Calu3 (cell line): ENCODE measurements at regions of chr11 and their contacts with region 1.

Region 1: DNA sequence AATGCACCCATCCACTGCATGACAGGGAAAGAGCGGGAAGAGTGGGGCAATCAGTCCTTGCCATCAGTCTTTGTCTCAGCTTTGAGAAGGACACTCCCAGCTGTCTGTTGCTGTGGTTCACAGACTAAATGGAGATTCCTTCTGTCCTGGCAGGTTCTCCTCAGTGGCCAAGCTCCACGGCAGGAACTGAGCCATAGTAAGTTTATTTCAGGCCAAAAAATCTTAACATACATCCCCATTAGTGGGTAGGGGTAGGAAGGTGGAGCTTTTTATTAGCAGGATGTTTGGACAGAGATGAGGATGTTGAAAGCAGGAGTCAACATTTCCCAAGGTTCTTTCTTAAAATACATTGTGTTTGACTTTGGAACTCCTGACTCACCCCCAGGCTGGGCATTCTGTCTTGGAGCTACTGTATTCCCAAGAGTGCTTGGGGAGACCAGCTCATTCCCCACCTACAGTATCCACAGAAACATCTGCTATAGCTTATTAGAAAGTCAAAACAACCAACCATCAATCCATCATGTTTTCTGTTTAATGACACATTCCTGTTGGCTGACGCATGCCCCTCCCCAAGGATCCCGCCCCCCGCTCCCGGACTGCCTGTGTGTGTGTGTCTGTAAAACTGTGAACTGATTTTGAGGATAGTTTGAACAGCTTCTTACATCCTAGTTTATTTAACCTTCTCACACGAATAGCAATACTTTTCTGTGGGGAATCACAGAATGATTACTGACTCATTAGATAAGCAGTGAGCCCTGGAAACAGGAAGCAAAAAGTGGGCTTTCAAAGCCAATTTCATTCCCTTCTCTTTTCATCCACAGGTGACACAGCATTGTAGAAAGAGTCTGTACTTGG is 109.5 kb downstream of the CCDC81 start:
- DNase-seq: peak; percentile 62
- H3K4me3 Mint-ChIP-seq: no peak overlapping the region
- H3K27ac Mint-ChIP-seq: peak overlapping the region; percentile 71
- H3K4me1 Mint-ChIP-seq: peaks cover 46% of the 10 kb centered on the region
- H3K27me3 Mint-ChIP-seq: no peaks in the 10 kb centered on the region
- CTCF ChIP-seq: no peak

Region 2: DNA sequence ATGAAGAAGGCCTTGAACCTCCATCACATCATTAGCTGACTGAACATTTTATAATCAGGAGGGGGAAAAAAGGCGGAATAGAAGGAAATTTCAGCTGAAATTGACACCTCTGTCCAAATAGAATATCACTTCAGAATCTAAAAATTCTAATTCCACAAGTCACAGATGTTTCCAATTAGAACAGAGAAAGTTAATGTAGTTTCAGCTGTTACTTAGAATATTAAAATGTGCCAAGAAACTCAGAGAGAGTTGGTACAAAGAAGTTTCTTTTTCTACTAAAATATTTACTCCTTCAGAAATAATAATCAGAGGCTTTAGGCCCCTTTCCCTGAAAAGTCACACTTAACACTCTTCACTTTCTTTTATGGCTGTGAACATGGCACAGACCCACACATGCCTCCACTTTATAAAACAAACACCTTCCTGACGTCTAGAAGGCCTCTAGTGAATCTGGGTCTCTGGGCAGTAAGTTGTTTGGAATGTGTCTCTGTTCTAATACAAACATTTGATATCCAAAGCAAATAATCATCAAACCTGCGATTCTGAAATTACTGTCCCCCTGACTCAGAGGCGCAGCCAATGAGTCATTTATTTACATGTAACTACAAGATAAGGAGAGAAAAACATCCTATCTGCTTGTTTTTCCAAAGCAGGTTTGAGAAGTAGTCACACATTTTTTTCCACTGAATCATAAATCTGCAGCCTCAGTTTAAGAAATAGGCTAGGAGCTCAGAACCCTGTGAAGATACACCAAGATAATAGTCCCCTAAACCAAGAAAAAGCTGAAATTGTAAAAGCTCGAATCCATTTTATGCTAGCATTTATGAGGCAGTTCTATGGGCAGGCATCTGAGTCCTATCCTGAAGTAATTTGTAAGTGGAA is 39.8 kb after region 1 on chr11:
- CTCF ChIA-PET with region 1: interaction called, 5 read pairs
- intact Hi-C with region 1: loop called (anchors 5 kb)
- DNase-seq: peak; percentile 29
- H3K4me3 Mint-ChIP-seq: peak overlapping the region; percentile 44
- H3K27ac Mint-ChIP-seq: peak overlapping the region; percentile 83
- H3K4me1 Mint-ChIP-seq: peaks cover 25% of the 10 kb centered on the region
- H3K27me3 Mint-ChIP-seq: no peaks in the 10 kb centered on the region
- CTCF ChIP-seq: no peak